ENCODE measurements at regions of chr11 and their contacts with region 1.

Region 1: GRCh38 chr11:16226245-16226644 is 130.1 kb downstream of the SOX6 start:
- DNase-seq: peak in 1 of 2 donors; percentile 34
- ATAC-seq: peak in 3 of 4 donors; percentile 66 to 87 (median 71)
- H3K4me3 ChIP-seq: no peak overlapping the region
- H3K27ac ChIP-seq: no peak overlapping the region
- H3K4me1 ChIP-seq: peaks cover 7% of the 10 kb centered on the region
- H3K27me3 ChIP-seq: no peaks in the 10 kb centered on the region
- CTCF ChIP-seq: no peak

Region 2: DNA sequence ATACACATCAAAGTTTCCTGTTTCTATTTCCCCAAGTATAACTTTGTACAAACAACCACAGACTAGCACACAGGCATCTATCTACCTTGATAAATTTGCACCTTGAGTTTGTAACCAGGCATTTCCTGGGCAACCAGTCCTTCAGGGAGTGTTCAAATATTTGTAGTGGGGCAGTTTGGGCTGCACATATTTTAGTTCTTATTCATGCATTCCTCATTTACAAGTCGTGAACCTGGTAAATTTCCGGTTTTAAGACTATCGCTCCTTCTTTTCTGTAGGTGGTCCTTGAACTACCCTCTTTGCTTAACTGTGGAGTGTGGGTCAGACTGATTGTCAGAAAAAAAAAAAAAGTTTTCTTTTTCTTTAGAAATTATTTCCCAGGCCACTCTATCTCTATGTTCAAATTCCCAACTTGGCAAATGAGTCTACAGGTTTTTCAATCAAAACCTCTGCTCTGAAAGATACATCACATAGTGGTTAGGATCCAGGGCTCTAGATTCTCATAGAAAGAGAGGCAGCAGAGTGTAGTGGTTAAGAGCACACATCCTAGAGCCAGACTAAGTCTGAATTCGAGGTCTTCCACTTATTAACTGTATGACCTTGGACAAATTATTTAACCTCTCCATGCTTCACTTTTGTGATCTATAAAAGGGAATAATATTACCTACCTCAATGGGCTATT is 71.4 kb before region 1 on chr11:
- intact Hi-C with region 1: no loop called
- DNase-seq: no peak
- ATAC-seq: no peak
- H3K4me3 ChIP-seq: no peak overlapping the region
- H3K27ac ChIP-seq: no peak overlapping the region
- H3K4me1 ChIP-seq: peaks cover 16% of the 10 kb centered on the region
- H3K27me3 ChIP-seq: no peaks in the 10 kb centered on the region
- CTCF ChIP-seq: no peak

Region 3: GRCh38 chr11:16252373-16252772 is 26.1 kb after region 1 on chr11:
- intact Hi-C with region 1: loop called in 1 of 2 experiments (anchors 1 kb)
- DNase-seq: no peak
- ATAC-seq: no peak
- H3K4me3 ChIP-seq: no peak overlapping the region
- H3K27ac ChIP-seq: no peak overlapping the region
- H3K4me1 ChIP-seq: no peaks in the 10 kb centered on the region
- H3K27me3 ChIP-seq: no peaks in the 10 kb centered on the region
- CTCF ChIP-seq: no peak